Activated CD4-positive, alpha-beta T cell treated with anti-CD3 and anti-CD28 coated beads for 36 hours (primary cell): ENCODE measurements at regions of chr15 and their contacts with region 1.

Region 1: DNA sequence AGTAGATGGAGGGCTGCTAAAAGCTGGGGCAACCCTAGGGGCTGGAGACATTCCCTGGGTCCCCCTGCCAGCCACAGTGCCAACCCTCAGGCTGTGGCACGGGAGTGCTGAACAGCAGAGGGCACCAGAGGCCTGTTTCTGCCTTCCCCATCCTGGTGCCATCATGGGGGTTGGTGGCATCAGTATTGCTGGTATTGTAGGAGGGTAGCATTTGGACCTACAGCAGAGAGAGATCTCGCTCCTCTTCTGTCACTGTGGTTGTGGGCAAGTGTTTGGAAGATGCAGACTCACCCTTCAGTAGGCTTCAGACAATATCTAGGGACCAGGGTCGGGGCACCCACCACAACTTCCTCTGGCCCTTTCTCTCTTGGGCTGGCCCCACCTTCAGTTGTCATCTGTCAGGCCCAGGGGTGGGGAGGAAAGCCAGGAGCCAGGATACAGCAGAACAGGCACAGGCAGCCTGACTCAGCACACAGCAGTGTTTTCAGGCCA is 123.5 kb downstream of the RPLP1 start:
- DNase-seq: peak; percentile 85
- ATAC-seq: peak; percentile 59
- H3K4me3 Mint-ChIP-seq: no peak overlapping the region
- H3K27ac Mint-ChIP-seq: peak overlapping the region; percentile 16
- H3K4me1 Mint-ChIP-seq: peaks cover 37% of the 10 kb centered on the region
- H3K27me3 Mint-ChIP-seq: no peaks in the 10 kb centered on the region

Region 2: DNA sequence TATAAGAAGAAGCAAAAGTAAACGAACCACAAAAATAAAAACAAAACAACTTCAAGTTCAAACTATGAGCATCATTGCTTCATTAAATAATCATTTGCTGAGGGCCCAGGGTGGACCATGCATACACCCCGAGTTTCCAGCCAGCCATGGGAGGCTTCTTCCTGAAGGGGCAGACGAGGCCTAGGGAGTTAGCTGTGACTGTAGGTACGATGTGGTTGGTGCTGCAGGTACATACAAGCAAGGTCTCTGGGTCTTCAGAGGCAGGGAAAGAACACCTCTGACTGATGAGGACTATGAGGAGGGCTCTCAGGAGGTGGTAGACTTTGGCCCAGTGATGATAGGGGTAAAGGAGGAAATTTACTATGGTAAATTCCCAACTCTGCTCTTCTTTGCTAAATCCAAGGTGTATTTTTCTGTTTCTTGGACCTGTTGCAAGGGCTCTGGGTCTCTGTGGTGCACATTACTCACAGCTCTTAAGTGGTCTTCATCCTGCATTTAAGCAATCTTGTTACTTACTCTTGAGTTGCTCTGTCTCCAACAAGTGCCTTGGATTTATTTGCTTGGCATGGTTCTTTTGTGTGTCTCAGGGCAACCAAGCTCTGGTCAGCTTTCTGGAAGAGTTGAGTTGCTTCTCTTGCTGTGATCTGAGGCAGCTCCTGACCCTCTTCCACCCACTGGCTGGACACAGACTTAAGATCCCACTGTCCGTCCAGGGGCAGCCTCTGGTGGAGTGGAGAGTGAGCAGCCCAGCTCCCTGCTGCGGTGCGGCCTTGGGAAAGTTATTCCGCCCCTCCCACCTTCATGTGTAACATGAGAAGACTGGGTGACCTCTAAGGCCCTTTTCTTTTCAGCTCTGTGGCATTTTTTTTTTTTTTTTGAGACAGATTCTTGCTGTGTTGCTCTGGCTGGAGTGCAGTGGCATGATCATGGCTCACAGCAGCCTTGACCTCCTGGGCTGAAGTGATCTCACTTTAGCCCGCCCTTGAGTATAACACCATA is 218.0 kb before region 1 on chr15:
- CTCF ChIA-PET with region 1: no interaction called
- POLR2A ChIA-PET with region 1: no interaction called
- intact Hi-C with region 1: no loop called
- DNase-seq: no peak
- ATAC-seq: no peak
- H3K4me3 Mint-ChIP-seq: no peak overlapping the region
- H3K27ac Mint-ChIP-seq: no peak overlapping the region
- H3K4me1 Mint-ChIP-seq: no peaks in the 10 kb centered on the region
- H3K27me3 Mint-ChIP-seq: peaks cover 3% of the 10 kb centered on the region

Region 3: GRCh38 chr15:69468241-69469121 is 107.6 kb before region 1 on chr15:
- CTCF ChIA-PET with region 1: interaction called, 4 read pairs
- POLR2A ChIA-PET with region 1: no interaction called
- intact Hi-C with region 1: loop called in 1 of 2 experiments (anchors 2 kb)
- DNase-seq: peak; percentile 91
- ATAC-seq: peak; percentile 94
- H3K4me3 Mint-ChIP-seq: peak overlapping the region; percentile 59
- H3K27ac Mint-ChIP-seq: peak overlapping the region; percentile 85
- H3K4me1 Mint-ChIP-seq: peaks cover 27% of the 10 kb centered on the region
- H3K27me3 Mint-ChIP-seq: no peaks in the 10 kb centered on the region

Region 4: GRCh38 chr15:69713726-69714559 is 137.9 kb after region 1 on chr15:
- CTCF ChIA-PET with region 1: no interaction called
- POLR2A ChIA-PET with region 1: no interaction called
- intact Hi-C with region 1: loop called (anchors 1 to 10 kb)
- DNase-seq: peak; percentile 85
- ATAC-seq: peak; percentile 96
- H3K4me3 Mint-ChIP-seq: peak overlapping the region; percentile 21
- H3K27ac Mint-ChIP-seq: peak overlapping the region; percentile 85
- H3K4me1 Mint-ChIP-seq: peaks cover 60% of the 10 kb centered on the region
- H3K27me3 Mint-ChIP-seq: peaks cover 7% of the 10 kb centered on the region

Region 5: DNA sequence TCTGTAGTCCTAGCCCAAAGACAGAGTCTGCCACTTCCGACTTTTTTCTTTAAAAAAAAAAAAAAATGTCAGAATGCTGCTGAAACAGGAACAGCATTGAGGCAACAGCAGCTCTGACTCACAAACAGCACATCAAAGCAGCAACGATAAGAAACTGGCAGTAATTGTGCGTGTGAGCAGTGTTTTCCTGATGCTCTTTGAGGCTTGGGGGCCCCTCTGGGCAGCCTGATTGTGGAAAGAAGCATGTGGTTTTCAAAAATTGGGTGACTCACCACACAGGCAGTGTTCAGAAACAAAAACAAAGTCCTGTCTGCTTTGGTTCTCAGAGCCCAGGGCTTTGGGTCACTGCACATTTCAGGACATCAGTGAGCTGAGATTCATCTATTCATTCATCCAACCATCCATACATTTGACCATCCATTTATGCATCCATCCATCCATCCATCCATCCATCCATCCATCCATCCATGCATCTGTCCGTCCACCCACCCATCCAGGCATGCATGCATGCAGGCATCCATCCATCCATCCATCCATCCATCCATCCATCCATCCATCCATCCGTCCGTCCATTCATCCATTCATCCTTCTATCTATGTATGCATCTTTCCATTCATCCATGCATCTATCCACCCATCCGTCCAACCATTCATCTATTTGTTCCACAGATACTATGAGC is 184.9 kb after region 1 on chr15:
- CTCF ChIA-PET with region 1: interaction called, 3 read pairs
- POLR2A ChIA-PET with region 1: no interaction called
- intact Hi-C with region 1: loop called (anchors 1 to 5 kb)
- DNase-seq: peak; percentile 89
- ATAC-seq: peak; percentile 42
- H3K4me3 Mint-ChIP-seq: peak overlapping the region; percentile 25
- H3K27ac Mint-ChIP-seq: peak overlapping the region; percentile 94
- H3K4me1 Mint-ChIP-seq: peaks cover 72% of the 10 kb centered on the region
- H3K27me3 Mint-ChIP-seq: no peaks in the 10 kb centered on the region

Region 6: DNA sequence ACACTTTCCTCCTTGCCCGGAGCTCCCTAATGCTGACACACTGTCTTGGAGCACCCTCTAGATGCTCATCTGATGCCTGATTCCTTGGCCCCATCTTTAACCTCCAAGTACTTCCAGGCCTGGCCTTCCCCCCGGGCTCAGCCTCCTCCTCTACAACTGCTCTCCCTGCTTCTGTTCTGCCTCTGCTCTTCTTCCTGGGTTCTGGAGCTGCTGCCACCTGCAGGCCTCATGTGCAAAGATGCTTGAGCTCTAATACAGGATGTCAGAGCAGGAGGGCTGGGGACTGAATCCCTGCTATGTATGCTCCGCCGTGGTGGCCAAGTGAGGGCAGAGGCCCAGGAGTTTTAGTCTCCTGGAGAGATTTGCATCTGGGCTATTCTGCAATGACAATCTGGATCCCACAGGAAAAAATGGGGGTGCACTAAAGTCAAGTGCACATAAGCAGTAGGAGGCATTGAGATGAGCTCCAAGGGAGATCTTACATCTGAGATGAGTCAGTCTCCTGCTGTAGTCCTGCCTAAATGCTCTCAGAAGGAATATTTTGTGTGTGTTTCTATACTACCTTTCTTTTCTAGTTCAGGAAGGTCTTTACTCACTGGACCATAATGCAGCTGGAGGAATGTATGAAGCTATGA is 890.9 kb after region 1 on chr15:
- CTCF ChIA-PET with region 1: interaction called, 4 read pairs
- POLR2A ChIA-PET with region 1: no interaction called
- intact Hi-C with region 1: loop called in 1 of 2 experiments (anchors 5 kb)
- DNase-seq: peak; percentile 71
- ATAC-seq: peak; percentile 89
- H3K4me3 Mint-ChIP-seq: no peak overlapping the region
- H3K27ac Mint-ChIP-seq: no peak overlapping the region
- H3K4me1 Mint-ChIP-seq: peaks cover 2% of the 10 kb centered on the region
- H3K27me3 Mint-ChIP-seq: peaks cover 20% of the 10 kb centered on the region